Lower leg skin (tissue), 4 donors: ENCODE measurements at regions of chr19 and their contacts with region 1.

Region 1: GRCh38 chr19:37953533-37954303 is 46.7 kb downstream of the SIPA1L3 start:
- DNase-seq: peak in 1 of 2 donors; percentile 32
- H3K4me3 ChIP-seq: no peak overlapping the region
- CTCF ChIP-seq: no peak
- POLR2A ChIP-seq: no peak

Region 2: DNA sequence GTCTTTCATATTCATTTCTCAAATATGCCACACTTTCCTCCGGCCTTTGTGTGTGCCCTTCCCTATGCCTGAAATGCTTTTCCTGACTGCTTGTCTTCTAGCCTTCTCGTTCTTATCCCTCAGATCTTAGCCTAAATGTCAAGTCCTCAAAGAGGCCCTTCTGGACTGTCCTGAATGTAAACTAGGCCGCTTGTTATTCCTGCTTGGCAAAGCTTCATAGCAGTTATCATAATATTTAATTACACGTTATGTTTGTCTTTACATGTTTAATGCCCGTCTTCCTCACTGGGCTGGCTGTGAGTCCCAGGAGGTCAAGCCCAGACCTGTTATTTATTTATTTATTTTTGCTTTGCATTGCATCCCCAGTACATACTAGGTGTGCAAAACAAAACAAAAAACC is 15.9 kb after region 1 on chr19:
- intact Hi-C with region 1: loop called (anchors 1 kb)
- DNase-seq: no peak
- H3K4me3 ChIP-seq: no peak overlapping the region
- CTCF ChIP-seq: no peak
- POLR2A ChIP-seq: no peak